Sigmoid colon (tissue), 7 donors: ENCODE measurements at regions of chr7 and their contacts with region 1.

Region 1: DNA sequence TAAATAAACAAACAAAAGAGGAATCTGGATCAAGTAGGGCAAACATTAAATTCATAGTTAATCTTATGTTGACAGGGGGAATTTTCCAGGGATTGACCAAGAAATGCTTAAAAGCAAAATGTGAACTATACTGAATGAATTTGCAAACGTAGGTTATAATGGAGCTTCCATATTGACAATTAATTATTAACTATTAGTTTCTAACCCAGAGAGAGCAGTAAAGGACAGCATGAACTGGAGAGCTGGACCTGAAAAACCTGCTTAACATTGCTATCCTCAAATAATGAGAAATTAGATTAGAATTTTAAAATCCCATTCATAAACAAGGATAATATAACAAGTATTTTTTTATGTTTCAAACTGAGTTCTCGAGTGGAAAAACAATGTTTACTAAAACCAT is 1089.6 kb downstream of the DNAJB9 start:
- DNase-seq: no peak
- H3K4me3 ChIP-seq: no peak overlapping the region
- H3K27ac ChIP-seq: no peak overlapping the region
- H3K4me1 ChIP-seq: no peaks in the 10 kb centered on the region
- H3K27me3 ChIP-seq: no peaks in the 10 kb centered on the region
- CTCF ChIP-seq: no peak
- EP300 ChIP-seq: no peak
- POLR2A ChIP-seq: no peak

Region 2: GRCh38 chr7:108613112-108613759 is 1046.0 kb before region 1 on chr7:
- intact Hi-C with region 1: loop called (anchors 5 kb)
- DNase-seq: no peak
- H3K4me3 ChIP-seq: no peak overlapping the region
- H3K27ac ChIP-seq: no peak overlapping the region
- H3K4me1 ChIP-seq: no peaks in the 10 kb centered on the region
- H3K27me3 ChIP-seq: no peaks in the 10 kb centered on the region
- CTCF ChIP-seq: peak; percentile 27 to 73 (median 51)
- EP300 ChIP-seq: no peak
- POLR2A ChIP-seq: no peak

Region 3: GRCh38 chr7:109387530-109387929 is 271.7 kb before region 1 on chr7:
- intact Hi-C with region 1: no loop called
- DNase-seq: no peak
- H3K4me3 ChIP-seq: no peak overlapping the region
- H3K27ac ChIP-seq: no peak overlapping the region
- H3K4me1 ChIP-seq: no peaks in the 10 kb centered on the region
- H3K27me3 ChIP-seq: no peaks in the 10 kb centered on the region
- CTCF ChIP-seq: no peak
- EP300 ChIP-seq: no peak
- POLR2A ChIP-seq: no peak